Tibial artery (tissue), 4 donors: ENCODE measurements at regions of chr22 and their contacts with region 1.

Region 1: GRCh38 chr22:30262917-30263741 is 3.5 kb downstream of the OSM start:
- DNase-seq: peak; percentile 63 to 79
- H3K4me3 ChIP-seq: peak overlapping the region in 1 of 2 donors; percentile 29
- H3K27ac ChIP-seq: no peak overlapping the region
- H3K4me1 ChIP-seq: peaks cover 0 to 5% (median 4%) of the 10 kb centered on the region in 4 donors
- H3K27me3 ChIP-seq: peaks cover 0 to 6% of the 10 kb centered on the region in 2 donors
- CTCF ChIP-seq: peak; percentile 98 to 99

Region 2: GRCh38 chr22:30326706-30327362 is 63.7 kb after region 1 on chr22 and contains the start of gene TBC1D10A:
- intact Hi-C with region 1: no loop called
- DNase-seq: peak; percentile 87 to 94
- H3K4me3 ChIP-seq: peak within 1 kb of the TSS; percentile 72 to 99
- H3K27ac ChIP-seq: peak within 1 kb of the TSS; percentile 84 to 92
- H3K4me1 ChIP-seq: peaks cover 0 to 49% (median 41%) of the 10 kb centered on the region in 4 donors
- H3K27me3 ChIP-seq: no peaks in the 10 kb centered on the region
- CTCF ChIP-seq: no peak

Region 3: DNA sequence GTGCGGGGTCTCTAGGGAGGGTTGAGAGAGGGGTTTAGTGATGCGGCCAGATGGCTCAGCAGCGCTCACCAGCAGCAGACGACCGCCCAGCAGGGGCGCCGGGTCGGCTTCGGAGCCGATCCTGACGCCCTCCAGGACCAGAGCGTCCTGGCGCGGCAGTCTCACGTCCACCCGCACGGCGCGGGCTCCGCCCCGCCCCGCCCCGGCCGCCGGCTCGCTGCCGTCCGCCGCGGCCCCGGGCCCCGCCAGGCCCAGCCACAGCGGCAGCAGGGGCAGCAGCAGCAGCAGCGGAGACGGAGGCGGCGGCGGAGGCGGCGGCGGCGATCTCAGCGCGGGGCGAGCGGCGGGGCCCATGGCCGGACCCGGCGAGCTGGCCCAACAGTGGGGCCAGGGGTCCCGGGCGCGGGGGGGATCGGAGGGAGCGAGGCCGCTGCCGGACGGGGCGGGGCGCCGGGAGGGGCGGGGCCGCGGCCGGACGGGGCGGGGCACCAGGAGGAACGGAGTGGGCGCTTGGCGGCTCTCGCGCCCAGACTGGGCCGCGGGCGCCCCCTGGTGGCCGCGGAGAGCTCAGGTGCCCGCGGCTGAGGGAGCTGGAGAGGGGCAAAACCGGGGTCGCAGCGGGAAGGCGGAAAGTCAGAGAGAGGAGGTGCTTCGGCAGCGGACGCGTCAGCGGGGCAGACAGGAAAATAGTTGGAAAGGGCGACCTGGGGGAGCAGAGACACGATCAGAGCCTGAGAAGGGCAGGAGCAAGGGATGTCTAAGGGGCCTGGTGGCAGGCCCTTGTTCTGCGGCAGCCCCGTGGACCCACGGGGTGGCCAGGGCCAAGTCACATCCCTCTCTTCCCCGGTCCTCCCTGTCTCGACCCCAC is 124.1 kb after region 1 on chr22 and contains the start of gene RNF215:
- intact Hi-C with region 1: loop called (anchors 2 kb)
- DNase-seq: peak; percentile 65 to 91
- H3K4me3 ChIP-seq: peak within 1 kb of the TSS; percentile 60 to 62
- H3K27ac ChIP-seq: peak within 1 kb of the TSS; percentile 65 to 84
- H3K4me1 ChIP-seq: peaks cover 0 to 15% (median 12%) of the 10 kb centered on the region in 4 donors
- H3K27me3 ChIP-seq: no peaks in the 10 kb centered on the region
- CTCF ChIP-seq: peak; percentile 85 to 92

Region 4: GRCh38 chr22:30481711-30482110 is 218.6 kb after region 1 on chr22:
- intact Hi-C with region 1: loop called (anchors 5 kb)
- DNase-seq: no peak
- H3K4me3 ChIP-seq: no peak overlapping the region
- H3K27ac ChIP-seq: no peak overlapping the region
- H3K4me1 ChIP-seq: no peaks in the 10 kb centered on the region
- H3K27me3 ChIP-seq: peaks cover 0 to 4% of the 10 kb centered on the region in 2 donors
- CTCF ChIP-seq: no peak